ENCODE measurements at regions of chr14 and their contacts with region 1.

Region 1: GRCh38 chr14:70188659-70189455 is at the start of gene SLC8A3:
- DNase-seq: peak; percentile 35
- H3K4me3 ChIP-seq: peak within 1 kb of the TSS; percentile 37 to 59 (median 51)
- H3K27ac ChIP-seq: no peak within 1 kb of the TSS
- H3K4me1 ChIP-seq: peaks cover 19% of the 10 kb centered on the region
- H3K27me3 ChIP-seq: peaks cover 18 to 30% of the 10 kb centered on the region in 2 experiments
- CTCF ChIP-seq: no peak
- POLR2A ChIP-seq: no peak
- total RNA-seq, gene SLC8A3: not detected in 2 replicates

Region 2: DNA sequence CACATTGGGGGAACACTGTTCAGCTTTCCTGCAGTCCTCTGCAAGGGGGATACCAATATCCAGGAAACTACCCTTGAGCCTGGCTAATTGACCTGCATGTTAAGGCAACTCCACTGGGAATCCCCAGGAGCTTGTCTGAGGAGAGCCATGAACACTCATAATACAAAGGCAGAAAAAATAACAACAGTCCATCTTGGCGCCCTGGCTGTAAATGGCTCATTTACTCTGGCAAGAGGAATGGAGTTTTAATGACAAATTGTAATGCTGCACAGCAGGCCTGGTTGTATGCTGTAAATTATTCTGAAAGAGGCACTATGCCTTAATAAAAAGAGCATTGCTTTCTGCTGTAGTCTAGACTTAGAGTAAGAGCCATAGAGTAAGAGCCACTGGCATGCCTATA is 58.4 kb before region 1 on chr14:
- CTCF ChIA-PET with region 1: no interaction called
- POLR2A ChIA-PET with region 1: no interaction called
- dilution Hi-C with region 1: no loop called
- intact Hi-C with region 1: no loop called
- DNase-seq: no peak
- H3K4me3 ChIP-seq: no peak overlapping the region
- H3K27ac ChIP-seq: no peak overlapping the region
- H3K4me1 ChIP-seq: no peaks in the 10 kb centered on the region
- H3K27me3 ChIP-seq: no peaks in the 10 kb centered on the region
- CTCF ChIP-seq: no peak
- POLR2A ChIP-seq: no peak

Region 3: DNA sequence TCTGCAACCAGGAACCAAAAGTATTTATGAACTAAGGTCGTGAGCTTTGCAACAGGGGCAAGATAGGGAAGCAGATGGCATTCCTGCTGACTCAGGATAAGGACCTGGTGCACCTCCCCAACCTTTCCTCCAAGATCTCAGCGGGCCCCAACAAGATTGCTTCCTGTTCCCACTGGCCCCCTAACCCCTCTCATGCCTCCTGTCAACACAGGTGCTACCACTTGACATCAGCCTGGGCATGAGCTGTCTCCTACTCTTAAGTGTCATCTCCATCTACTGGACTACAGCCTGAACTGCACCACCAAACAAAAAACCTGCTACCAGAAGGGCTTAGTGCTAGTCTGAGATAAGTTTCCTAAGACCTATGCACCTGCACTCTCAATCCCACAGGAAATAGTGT is 378.9 kb after region 1 on chr14:
- CTCF ChIA-PET with region 1: no interaction called
- POLR2A ChIA-PET with region 1: no interaction called
- dilution Hi-C with region 1: no loop called
- intact Hi-C with region 1: loop called (anchors 10 kb)
- DNase-seq: peak; percentile 51
- H3K4me3 ChIP-seq: no peak overlapping the region
- H3K27ac ChIP-seq: no peak overlapping the region
- H3K4me1 ChIP-seq: no peaks in the 10 kb centered on the region
- H3K27me3 ChIP-seq: no peaks in the 10 kb centered on the region
- CTCF ChIP-seq: peak; percentile 56 to 65
- POLR2A ChIP-seq: no peak

Measured in endothelial cell of umbilical vein (primary cell).